ENCODE measurements at regions of chr13 and their contacts with region 1.

Region 1: DNA sequence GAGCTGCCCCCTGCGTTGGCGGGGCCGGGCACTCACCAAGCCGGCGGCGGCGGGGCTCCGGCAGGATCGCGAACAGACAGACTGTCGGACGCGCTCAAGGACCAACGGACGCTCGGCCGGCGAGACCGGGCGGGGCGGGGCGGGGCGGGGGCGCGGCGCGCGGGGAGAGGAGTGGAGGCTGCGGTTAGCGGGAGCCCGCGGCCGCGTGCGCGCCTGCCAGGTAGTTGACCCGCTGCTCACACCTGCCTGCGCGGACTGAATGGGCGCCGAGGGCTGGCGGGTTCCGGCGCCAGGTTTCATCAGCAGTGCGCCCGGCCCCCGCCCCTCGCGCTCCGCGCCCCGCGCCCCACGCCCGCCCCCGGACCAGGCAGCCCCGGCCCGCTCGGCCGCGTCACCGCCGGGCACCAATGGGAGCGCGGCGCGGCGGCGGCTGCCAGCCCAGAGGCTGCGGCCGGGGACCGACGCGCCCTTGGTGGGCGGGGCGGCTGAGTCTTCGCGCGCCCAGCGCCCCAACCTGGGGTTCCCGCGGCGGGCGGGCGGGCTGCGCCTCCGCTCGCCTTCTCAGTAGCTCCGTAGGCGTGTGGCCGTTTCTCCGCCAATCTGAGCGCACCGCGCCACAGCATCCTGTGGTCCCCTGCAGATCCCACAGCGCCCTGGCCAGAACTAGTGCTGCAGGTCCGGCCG is at the start of gene SLC7A1:
- DNase-seq: peak; percentile 80
- ATAC-seq: peak; percentile 96
- H3K4me3 ChIP-seq: peak within 1 kb of the TSS; percentile 85
- H3K27ac ChIP-seq: peak within 1 kb of the TSS; percentile 52
- H3K4me1 ChIP-seq: peaks cover 8% of the 10 kb centered on the region
- H3K27me3 ChIP-seq: no peaks in the 10 kb centered on the region
- CTCF ChIP-seq: 0 out of 2 replicates have a peak, but pooled peaks have one; percentile 12
- POLR2A ChIP-seq: peak; percentile 43; the same call in 1 of the 2 replicates
- RAD21 ChIP-seq: no peak; the same call in 1 of the 2 replicates
- total RNA-seq, gene SLC7A1: 9.7 and 10.3 TPM in 2 replicates

Region 2: DNA sequence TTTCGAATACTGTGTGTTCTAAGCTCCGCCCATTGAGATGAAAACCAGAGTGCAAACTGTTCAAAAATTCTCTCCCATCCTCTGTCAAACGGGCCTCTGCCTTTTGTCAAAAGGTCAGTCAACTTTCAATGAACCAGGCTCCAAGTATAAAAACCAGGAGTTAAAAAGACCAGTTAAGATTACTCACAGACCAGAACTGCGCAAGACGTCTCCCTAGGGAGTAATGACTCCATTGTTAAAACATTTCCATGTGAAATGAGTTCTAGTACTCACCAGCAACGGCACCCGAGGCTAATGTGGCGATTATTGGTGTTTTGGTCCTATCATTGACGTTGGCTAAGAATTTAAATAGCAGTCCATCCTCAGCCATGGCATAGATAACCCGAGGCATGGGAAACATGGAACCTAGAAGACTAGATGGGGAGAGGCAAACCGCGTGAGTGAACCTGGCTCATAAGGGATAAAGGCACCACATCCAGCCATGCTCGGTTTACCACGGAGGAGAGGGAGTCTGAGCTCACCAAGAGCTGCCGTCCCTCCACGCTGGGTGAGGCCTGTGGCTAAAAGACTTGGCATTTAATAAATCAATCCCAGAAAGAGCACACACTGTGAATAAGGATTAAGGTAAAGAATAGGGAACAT is 73.4 kb before region 1 on chr13:
- CTCF ChIA-PET with region 1: no interaction called
- POLR2A ChIA-PET with region 1: no interaction called
- dilution Hi-C with region 1: no loop called
- in situ Hi-C with region 1: no loop called
- intact Hi-C with region 1: loop called (anchors 5 kb)
- DNase-seq: peak; percentile 61
- ATAC-seq: no peak
- H3K4me3 ChIP-seq: no peak overlapping the region
- H3K27ac ChIP-seq: no peak overlapping the region
- H3K4me1 ChIP-seq: peaks cover 7% of the 10 kb centered on the region
- H3K27me3 ChIP-seq: no peaks in the 10 kb centered on the region
- CTCF ChIP-seq: no peak
- POLR2A ChIP-seq: no peak
- RAD21 ChIP-seq: no peak

Region 3: DNA sequence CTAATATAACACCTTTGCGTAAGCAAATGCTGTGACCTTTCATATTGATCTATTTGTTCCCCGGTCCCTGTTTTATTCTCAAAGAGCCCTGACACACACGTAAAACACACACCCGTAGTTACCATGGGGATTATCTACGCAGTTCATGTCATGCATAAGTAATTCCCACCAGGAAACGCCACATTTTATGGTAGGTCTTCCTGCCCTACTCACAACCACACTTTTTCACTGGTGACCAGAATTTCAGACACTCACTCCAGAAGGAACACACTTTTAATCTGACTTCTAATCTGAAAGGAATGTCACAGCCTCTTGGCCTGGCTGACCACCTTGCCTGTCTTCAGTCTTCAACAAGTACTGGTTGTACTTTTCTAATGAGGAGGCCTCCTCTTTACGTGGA is 46.8 kb before region 1 on chr13:
- CTCF ChIA-PET with region 1: no interaction called
- POLR2A ChIA-PET with region 1: no interaction called
- dilution Hi-C with region 1: no loop called
- in situ Hi-C with region 1: no loop called
- intact Hi-C with region 1: no loop called
- DNase-seq: peak; percentile 39
- ATAC-seq: no peak
- H3K4me3 ChIP-seq: no peak overlapping the region
- H3K27ac ChIP-seq: no peak overlapping the region
- H3K4me1 ChIP-seq: no peaks in the 10 kb centered on the region
- H3K27me3 ChIP-seq: no peaks in the 10 kb centered on the region
- CTCF ChIP-seq: no peak
- POLR2A ChIP-seq: no peak
- RAD21 ChIP-seq: no peak

Measured in IMR-90 (cell line).